Right ventricle myocardium inferior (tissue), 1 donor: ENCODE measurements at regions of chr11 and their contacts with region 1.

Region 1: DNA sequence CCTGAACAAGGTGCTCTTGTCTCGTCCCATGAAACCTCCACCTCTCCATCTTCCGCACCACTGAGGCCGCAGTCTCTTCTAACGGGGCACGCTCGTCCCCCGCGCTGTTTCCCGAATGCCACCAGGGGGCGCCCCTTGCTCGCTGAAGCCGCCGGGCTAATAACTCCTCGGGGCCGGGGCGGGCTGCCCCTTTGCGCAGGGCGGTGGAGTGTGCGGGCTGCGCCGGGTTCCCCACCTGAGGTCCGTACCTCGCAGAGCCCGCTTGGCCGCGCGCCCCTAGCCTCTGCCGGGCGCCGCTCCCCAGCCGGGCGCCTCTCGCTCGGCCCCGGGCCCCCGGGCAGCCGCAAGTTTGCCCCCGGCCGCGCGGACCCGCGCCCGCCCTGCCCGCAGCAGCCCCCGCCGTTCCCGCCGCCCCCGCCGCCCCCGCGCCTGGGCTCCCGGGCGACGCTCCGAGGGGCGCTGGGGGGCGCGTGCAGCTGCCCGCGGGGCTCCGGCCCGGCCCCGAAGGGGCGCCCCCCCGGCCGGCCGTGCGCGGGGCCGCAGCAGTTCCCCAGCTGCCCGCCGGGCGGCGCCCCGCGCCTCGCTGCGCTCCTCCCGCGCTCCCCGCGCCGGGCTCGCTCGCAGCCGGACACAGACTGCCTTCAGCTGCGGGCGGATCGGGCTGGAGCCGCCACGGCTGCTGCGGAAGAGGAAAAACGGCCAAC is at the start of gene GRIK4:
- DNase-seq: peak; percentile 92
- ATAC-seq: peak; percentile 91
- total RNA-seq, gene GRIK4: not detected

Region 2: DNA sequence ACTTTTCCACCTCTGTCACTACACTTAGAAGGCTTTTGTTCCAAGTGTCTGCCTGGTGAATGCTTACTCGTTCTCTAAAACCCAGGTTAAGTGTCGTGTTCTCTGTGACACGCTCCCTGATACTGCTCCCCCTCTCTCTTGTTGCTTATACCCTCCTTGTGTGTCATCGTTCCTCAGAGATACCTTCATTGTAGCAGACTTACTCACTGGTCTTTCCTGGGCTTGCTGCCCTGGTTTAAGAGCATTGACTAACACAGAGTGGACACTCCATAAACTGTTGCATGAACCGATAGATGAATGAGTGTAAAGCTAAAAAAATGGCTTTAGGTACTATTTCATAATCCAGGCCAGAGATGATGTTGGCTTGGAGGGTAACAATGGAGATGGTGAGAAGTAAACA is 171.6 kb after region 1 on chr11:
- intact Hi-C with region 1: loop called (anchors 1 kb)
- DNase-seq: no peak
- ATAC-seq: no peak

Region 3: GRCh38 chr11:120801801-120802689 is 290.8 kb after region 1 on chr11:
- intact Hi-C with region 1: loop called (anchors 2 kb)
- DNase-seq: no peak
- ATAC-seq: no peak

Region 4: GRCh38 chr11:120952461-120953434 is 441.5 kb after region 1 on chr11:
- intact Hi-C with region 1: loop called (anchors 5 kb)
- DNase-seq: peak; percentile 85
- ATAC-seq: peak; percentile 94

Region 5: GRCh38 chr11:121112498-121113455 is 601.5 kb after region 1 on chr11:
- intact Hi-C with region 1: loop called (anchors 2 kb)
- DNase-seq: no peak
- ATAC-seq: peak; percentile 84

Region 6: DNA sequence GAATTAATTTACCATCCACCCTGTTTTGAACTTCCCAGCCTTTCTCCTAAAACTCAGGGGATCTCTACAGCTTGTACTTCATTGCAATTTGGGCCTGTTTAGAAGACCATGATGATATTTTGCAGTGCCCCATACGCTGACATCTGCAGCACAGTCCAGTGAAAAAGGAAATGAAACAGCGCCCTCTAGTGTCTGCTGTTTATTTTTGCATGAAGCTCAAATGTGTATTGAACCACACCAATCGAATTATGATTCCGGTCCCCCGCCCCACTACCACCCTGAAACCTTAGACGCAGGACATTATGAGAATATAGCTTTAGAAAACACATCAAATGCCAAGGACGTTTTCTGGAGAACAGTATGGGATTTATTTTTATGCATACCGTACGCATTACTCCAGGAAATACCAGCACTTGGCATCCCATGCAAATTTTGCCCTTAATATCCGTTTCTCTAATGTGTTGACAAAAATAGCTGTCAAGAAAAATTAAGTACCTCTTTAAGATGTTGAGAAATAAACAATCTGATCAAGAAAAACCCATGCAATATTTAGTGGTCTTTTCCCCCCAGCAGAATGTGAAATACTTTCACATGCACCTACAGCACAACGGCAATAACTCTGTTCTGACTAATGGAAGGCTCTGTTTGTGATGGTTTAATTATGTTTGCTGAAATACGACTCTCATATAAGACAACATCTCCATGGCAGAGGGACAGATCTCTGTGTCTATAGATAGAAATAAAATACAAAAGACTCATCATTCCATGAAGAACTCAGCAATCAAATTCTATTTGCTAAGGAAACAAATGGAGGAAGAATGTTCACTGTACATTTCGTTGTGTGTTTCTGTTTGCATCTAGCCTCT is 683.7 kb after region 1 on chr11:
- intact Hi-C with region 1: loop called (anchors 2 kb)
- DNase-seq: no peak
- ATAC-seq: peak; percentile 79